SK-N-SH (cell line): ENCODE measurements at regions of chr1 and their contacts with region 1.

Region 1: GRCh38 chr1:183243161-183244050 is 57.3 kb downstream of the LAMC2 start:
- DNase-seq: no peak
- H3K4me3 ChIP-seq: no peak overlapping the region
- H3K27ac ChIP-seq: no peak overlapping the region
- H3K4me1 ChIP-seq: no peaks in the 10 kb centered on the region
- H3K27me3 ChIP-seq: 0 out of 2 replicates have a peak, but pooled peaks cover 1% of the 10 kb centered on the region
- CTCF ChIP-seq: no peak
- EP300 ChIP-seq: no peak
- RAD21 ChIP-seq: no peak

Region 2: GRCh38 chr1:183227963-183228649 is 15.3 kb before region 1 on chr1:
- CTCF ChIA-PET with region 1: interaction called, 37 read pairs
- POLR2A ChIA-PET with region 1: no interaction called
- DNase-seq: peak; percentile 66
- H3K4me3 ChIP-seq: no peak overlapping the region
- H3K27ac ChIP-seq: no peak overlapping the region
- H3K4me1 ChIP-seq: peaks cover 0 to 2% of the 10 kb centered on the region in 2 experiments; a peak in 1 of 4 replicates
- H3K27me3 ChIP-seq: no peaks in the 10 kb centered on the region
- CTCF ChIP-seq: peak; percentile 79
- EP300 ChIP-seq: no peak
- RAD21 ChIP-seq: peak; percentile 73

Region 3: DNA sequence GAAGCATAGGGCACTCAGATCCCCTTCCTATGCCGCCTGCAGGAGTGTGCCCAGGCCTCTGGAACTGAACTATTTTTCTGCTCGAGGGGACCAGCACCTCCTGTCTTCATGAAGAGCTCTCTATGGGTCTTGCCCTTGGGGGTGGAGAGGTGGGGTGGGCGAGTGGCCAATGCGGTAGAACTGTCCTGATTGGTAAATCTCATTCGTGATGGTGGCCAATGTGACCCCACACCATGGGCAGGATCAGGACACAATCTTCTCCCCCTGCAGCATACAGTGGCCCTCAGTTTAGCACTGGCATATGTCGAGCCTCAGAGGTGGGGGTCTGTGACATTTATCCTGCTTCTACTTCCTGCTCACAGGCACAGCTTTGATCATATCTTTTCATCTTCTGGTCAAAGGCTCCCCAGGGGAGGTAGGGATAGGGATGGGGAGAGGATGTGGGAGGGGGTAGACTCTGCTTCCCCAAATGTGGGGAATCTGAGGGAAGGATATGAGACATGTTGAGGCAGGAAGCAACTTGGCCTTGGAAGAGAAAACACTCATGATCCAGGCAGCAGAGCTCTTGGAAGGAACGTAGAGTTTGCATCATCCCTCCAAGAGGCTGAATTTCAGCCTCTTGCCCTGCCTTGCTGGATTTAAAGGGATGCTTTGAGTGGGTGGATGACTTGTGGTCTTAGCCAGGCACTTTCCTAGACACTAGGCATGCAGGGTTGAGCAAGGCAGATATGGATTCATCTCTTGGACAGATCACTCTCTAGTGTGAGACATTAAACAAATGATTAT is 24.4 kb after region 1 on chr1:
- CTCF ChIA-PET with region 1: no interaction called
- POLR2A ChIA-PET with region 1: no interaction called
- DNase-seq: peak; percentile 29
- H3K4me3 ChIP-seq: no peak overlapping the region
- H3K27ac ChIP-seq: peak overlapping the region in 1 of 2 experiments; percentile 60; a peak in 2 of 4 replicates
- H3K4me1 ChIP-seq: peaks cover 16 to 22% of the 10 kb centered on the region in 2 experiments
- H3K27me3 ChIP-seq: no peaks in the 10 kb centered on the region
- CTCF ChIP-seq: no peak
- EP300 ChIP-seq: no peak
- RAD21 ChIP-seq: no peak